CD4-positive, alpha-beta T cell (primary cell): ENCODE measurements at regions of chr3 and their contacts with region 1.

Region 1: DNA sequence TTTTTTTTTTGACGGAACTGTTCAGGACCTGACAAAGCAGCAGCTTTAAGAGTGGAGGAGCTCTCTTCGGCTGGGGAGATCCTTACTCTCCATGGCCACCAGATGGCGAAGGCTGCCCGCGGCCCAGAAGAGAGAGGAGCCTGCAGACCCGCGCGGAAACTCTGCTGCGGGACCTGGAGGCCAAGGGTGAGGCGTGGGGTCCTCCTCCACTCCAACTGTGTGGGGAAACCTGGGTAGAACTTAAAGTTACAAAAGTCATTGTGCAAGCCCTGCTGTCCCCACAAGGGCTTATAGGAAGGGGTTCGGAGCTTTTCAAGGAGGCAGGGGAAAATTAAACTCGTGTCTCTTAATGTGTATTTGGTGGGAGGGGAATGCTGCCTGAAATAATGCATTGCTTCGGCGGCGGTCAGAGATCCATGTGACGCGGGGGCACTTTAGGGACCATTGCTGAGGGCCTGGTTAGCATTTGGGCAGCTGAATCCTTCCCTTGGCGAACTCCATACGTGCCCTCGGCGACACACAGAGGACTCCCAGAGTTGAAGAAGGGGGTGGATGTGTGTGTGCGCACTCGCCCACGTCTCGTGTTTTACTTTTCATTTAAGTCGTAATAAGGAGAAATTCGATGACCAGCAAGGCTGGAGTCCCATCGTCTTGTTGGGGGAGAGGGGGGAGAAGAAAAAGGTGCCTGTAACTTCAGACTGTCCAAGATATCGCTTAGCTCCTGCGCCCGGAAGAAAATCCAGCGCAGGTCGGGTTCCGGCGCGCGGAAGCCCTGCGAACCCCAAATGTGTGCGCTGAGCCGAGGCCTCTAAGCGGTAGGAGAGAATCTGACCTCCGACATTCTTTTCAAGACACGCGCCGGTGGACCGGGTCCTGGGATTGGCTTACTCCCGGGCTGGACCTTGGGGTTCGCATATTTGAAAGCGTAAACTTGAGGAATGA is 9.7 kb downstream of the EOMES start:
- DNase-seq: peak; percentile 54 to 90 (median 72)
- ATAC-seq: peak; percentile 95
- H3K4me3 ChIP-seq: peak overlapping the region; percentile 68
- H3K4me3 Mint-ChIP-seq: peak overlapping the region; percentile 97
- H3K27ac ChIP-seq: no peak overlapping the region
- H3K27ac Mint-ChIP-seq: peak overlapping the region; percentile 3
- H3K4me1 ChIP-seq: peaks cover 27% of the 10 kb centered on the region
- H3K4me1 Mint-ChIP-seq: peaks cover 27% of the 10 kb centered on the region
- H3K27me3 ChIP-seq: peaks cover 26 to 31% of the 10 kb centered on the region in 2 experiments
- H3K27me3 Mint-ChIP-seq: peaks cover 82% of the 10 kb centered on the region
- CTCF ChIP-seq: peak; percentile 88

Region 2: DNA sequence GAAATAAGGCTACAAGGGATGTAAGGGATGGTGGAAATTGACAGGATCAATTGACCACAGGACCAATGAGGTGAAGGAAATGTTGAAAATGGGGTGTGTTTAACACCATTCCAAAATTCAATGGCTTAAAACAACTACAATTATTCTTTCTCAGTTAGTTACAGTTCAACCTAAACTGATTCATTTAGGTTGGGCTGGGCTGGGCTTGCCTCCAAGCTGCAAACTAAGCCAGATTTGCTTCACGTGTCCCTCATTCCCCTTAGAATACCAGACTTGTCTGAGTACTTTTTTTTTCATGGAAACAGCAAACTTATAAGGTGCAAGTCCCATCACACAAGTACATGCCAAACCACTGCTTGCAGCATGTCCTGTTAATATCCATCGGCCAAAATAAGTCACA is 623.3 kb before region 1 on chr3:
- CTCF ChIA-PET with region 1: no interaction called
- POLR2A ChIA-PET with region 1: no interaction called
- intact Hi-C with region 1: no loop called
- DNase-seq: no peak
- ATAC-seq: no peak
- H3K4me3 ChIP-seq: no peak overlapping the region
- H3K4me3 Mint-ChIP-seq: no peak overlapping the region
- H3K27ac ChIP-seq: no peak overlapping the region
- H3K27ac Mint-ChIP-seq: no peak overlapping the region
- H3K4me1 ChIP-seq: no peaks in the 10 kb centered on the region
- H3K4me1 Mint-ChIP-seq: no peaks in the 10 kb centered on the region
- H3K27me3 ChIP-seq: no peaks in the 10 kb centered on the region
- H3K27me3 Mint-ChIP-seq: peaks cover 6% of the 10 kb centered on the region
- CTCF ChIP-seq: no peak

Region 3: DNA sequence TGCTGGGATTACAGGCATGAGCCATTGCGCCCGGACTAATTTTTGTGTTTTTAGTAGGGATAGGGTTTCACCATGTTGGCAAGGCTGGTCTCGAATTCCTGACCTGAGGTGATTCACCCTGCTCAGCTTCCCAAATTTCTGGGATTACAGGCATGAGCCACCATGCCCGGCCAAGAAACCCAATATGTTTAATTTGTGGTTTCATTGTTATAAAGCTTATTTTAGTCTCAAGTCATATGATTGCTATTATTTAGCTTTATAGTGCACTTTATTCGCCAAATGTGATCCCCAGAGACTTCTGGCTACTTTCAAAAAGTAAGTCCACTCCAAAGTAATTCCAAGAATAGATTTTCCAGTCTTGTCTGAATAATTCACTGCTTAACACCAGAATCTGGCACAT is 208.9 kb before region 1 on chr3:
- CTCF ChIA-PET with region 1: no interaction called
- POLR2A ChIA-PET with region 1: no interaction called
- intact Hi-C with region 1: no loop called
- DNase-seq: no peak
- ATAC-seq: no peak
- H3K4me3 ChIP-seq: no peak overlapping the region
- H3K4me3 Mint-ChIP-seq: no peak overlapping the region
- H3K27ac ChIP-seq: no peak overlapping the region
- H3K27ac Mint-ChIP-seq: no peak overlapping the region
- H3K4me1 ChIP-seq: no peaks in the 10 kb centered on the region
- H3K4me1 Mint-ChIP-seq: no peaks in the 10 kb centered on the region
- H3K27me3 ChIP-seq: no peaks in the 10 kb centered on the region
- H3K27me3 Mint-ChIP-seq: no peaks in the 10 kb centered on the region
- CTCF ChIP-seq: no peak

Region 4: DNA sequence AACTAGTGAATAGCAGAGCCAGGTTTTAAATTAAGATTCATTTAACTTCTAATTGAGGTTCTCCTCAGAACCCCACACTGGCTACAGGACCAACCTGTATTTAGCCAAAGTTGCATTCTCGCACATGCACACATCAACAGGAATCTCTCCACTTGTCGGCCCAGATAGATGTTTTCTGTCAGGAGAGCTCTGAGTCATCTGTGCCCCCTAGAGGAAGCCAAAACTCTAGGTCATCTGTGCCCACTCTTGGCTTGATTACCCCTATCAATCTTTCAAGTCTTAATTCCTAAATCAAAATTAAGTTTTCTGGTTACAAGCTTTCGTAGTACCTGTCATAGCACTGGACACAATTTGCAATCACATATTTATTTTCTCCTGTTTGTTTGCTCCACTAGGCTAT is 114.6 kb after region 1 on chr3:
- CTCF ChIA-PET with region 1: no interaction called
- POLR2A ChIA-PET with region 1: no interaction called
- intact Hi-C with region 1: no loop called
- DNase-seq: no peak
- ATAC-seq: no peak
- H3K4me3 ChIP-seq: no peak overlapping the region
- H3K4me3 Mint-ChIP-seq: no peak overlapping the region
- H3K27ac ChIP-seq: no peak overlapping the region
- H3K27ac Mint-ChIP-seq: no peak overlapping the region
- H3K4me1 ChIP-seq: no peaks in the 10 kb centered on the region
- H3K4me1 Mint-ChIP-seq: peaks cover 11% of the 10 kb centered on the region
- H3K27me3 ChIP-seq: no peaks in the 10 kb centered on the region
- H3K27me3 Mint-ChIP-seq: no peaks in the 10 kb centered on the region
- CTCF ChIP-seq: no peak

Region 5: GRCh38 chr3:28089527-28089897 is 377.1 kb after region 1 on chr3:
- CTCF ChIA-PET with region 1: no interaction called
- POLR2A ChIA-PET with region 1: interaction called, 3 read pairs
- intact Hi-C with region 1: loop called (anchors 1 to 2 kb)
- DNase-seq: peak in 3 of 14 experiments; percentile 11 to 42 (median 14)
- ATAC-seq: no peak
- H3K4me3 ChIP-seq: no peak overlapping the region
- H3K4me3 Mint-ChIP-seq: no peak overlapping the region
- H3K27ac ChIP-seq: no peak overlapping the region
- H3K27ac Mint-ChIP-seq: no peak overlapping the region
- H3K4me1 ChIP-seq: no peaks in the 10 kb centered on the region
- H3K4me1 Mint-ChIP-seq: no peaks in the 10 kb centered on the region
- H3K27me3 ChIP-seq: no peaks in the 10 kb centered on the region
- H3K27me3 Mint-ChIP-seq: no peaks in the 10 kb centered on the region
- CTCF ChIP-seq: no peak

Region 6: GRCh38 chr3:28232659-28233058 is 520.3 kb after region 1 on chr3:
- CTCF ChIA-PET with region 1: no interaction called
- POLR2A ChIA-PET with region 1: no interaction called
- intact Hi-C with region 1: no loop called
- DNase-seq: no peak
- ATAC-seq: no peak
- H3K4me3 ChIP-seq: no peak overlapping the region
- H3K4me3 Mint-ChIP-seq: no peak overlapping the region
- H3K27ac ChIP-seq: no peak overlapping the region
- H3K27ac Mint-ChIP-seq: no peak overlapping the region
- H3K4me1 ChIP-seq: no peaks in the 10 kb centered on the region
- H3K4me1 Mint-ChIP-seq: peaks cover 4% of the 10 kb centered on the region
- H3K27me3 ChIP-seq: no peaks in the 10 kb centered on the region
- H3K27me3 Mint-ChIP-seq: no peaks in the 10 kb centered on the region
- CTCF ChIP-seq: no peak

Region 7: DNA sequence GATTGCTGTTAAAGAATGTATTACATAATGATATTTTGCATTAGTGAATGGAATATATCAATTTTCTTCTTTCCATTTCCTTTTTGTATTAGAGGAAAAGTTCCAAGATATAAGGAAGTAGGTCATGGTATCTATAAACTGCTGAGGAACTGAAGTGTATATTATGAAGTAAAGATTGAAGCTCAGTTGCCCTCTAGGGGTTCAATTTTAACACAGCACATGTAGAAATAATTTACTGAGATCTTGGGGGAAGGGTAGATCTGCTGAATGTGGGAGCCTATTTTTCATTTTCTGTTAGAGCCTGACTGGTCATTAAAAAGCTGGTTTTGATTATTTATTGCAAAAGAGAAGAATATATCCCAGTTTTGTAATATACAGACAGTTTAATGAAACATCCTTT is 574.2 kb after region 1 on chr3:
- CTCF ChIA-PET with region 1: interaction called, 6 read pairs
- POLR2A ChIA-PET with region 1: interaction called, 7 read pairs
- intact Hi-C with region 1: loop called (anchors 1 to 2 kb)
- DNase-seq: peak in 3 of 14 experiments; percentile 54 to 62 (median 62)
- ATAC-seq: peak; percentile 80
- H3K4me3 ChIP-seq: no peak overlapping the region
- H3K4me3 Mint-ChIP-seq: no peak overlapping the region
- H3K27ac ChIP-seq: no peak overlapping the region
- H3K27ac Mint-ChIP-seq: no peak overlapping the region
- H3K4me1 ChIP-seq: no peaks in the 10 kb centered on the region
- H3K4me1 Mint-ChIP-seq: peaks cover 20% of the 10 kb centered on the region
- H3K27me3 ChIP-seq: no peaks in the 10 kb centered on the region
- H3K27me3 Mint-ChIP-seq: no peaks in the 10 kb centered on the region
- CTCF ChIP-seq: peak; percentile 71

Region 8: GRCh38 chr3:28334552-28334951 is 622.1 kb after region 1 on chr3:
- CTCF ChIA-PET with region 1: interaction called, 17 read pairs
- POLR2A ChIA-PET with region 1: interaction called, 9 read pairs
- intact Hi-C with region 1: loop called in 1 of 2 experiments (anchors 1 kb)
- DNase-seq: peak in 1 of 14 experiments; percentile 21
- ATAC-seq: no peak
- H3K4me3 ChIP-seq: no peak overlapping the region
- H3K4me3 Mint-ChIP-seq: no peak overlapping the region
- H3K27ac ChIP-seq: no peak overlapping the region
- H3K27ac Mint-ChIP-seq: no peak overlapping the region
- H3K4me1 ChIP-seq: peaks cover 4% of the 10 kb centered on the region
- H3K4me1 Mint-ChIP-seq: peaks cover 14% of the 10 kb centered on the region
- H3K27me3 ChIP-seq: no peaks in the 10 kb centered on the region
- H3K27me3 Mint-ChIP-seq: no peaks in the 10 kb centered on the region
- CTCF ChIP-seq: peak; percentile 39